K562 (cell line): ENCODE measurements at regions of chr1 and their contacts with region 1.

Region 1: DNA sequence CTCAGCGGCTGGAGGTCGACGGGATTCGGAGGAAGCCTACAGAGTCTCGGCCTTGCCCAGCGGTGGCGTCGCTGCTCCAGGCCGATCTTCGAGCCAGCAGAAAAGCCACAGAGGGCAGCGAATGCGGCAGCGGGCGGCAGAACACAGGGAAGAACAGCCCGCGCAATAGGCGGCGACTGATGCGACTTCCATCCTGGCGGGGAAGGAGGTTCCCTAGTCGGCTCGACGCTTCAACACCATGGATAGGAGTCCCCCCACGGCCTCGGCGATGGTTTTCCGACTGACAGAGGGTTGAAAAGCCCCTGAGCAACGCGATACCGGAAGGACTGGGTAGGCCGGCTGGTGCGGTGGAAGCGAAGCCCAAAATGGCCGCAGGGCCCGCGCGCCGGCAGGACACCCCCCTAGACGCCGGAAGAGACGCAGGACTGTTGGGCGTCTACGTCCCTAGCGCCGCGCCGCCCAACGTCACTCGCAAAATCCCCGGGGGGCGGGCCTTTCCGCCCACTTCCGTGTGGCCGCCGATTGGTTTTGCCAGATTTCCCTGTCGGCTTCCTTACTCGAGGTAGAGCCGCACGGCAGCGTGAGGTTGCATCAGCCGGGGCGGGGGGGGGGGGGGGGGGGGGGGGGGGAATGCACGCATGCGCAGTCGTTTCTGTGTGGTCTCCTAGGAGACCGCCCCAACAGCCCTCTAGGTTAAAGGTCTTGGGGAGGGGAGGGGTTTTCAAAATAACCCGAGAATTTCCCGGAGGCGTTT is at the start of gene PPP1R15B:
- DNase-seq: peak; percentile 98 to 99 (median 99)
- ATAC-seq: peak; percentile 90
- H3K4me3 ChIP-seq: peak within 1 kb of the TSS; percentile 90
- H3K27ac ChIP-seq: peak within 1 kb of the TSS; percentile 93
- H3K4me1 ChIP-seq: peaks cover 9 to 10% of the 10 kb centered on the region in 2 experiments; a peak in 4 of 5 replicates
- H3K27me3 ChIP-seq: no peaks in the 10 kb centered on the region
- CTCF ChIP-seq: no peak
- EP300 ChIP-seq: peak; percentile 74
- POLR2A ChIP-seq: peak; percentile 97
- RAD21 ChIP-seq: no peak
- polyA plus RNA-seq, gene PPP1R15B: 17.0 to 24.7 TPM

Region 2: GRCh38 chr1:204398217-204399081 is 13.2 kb before region 1 on chr1:
- CTCF ChIA-PET with region 1: interaction called, 4 read pairs
- POLR2A ChIA-PET with region 1: interaction called, 87 read pairs
- in situ Hi-C with region 1: no loop called
- intact Hi-C with region 1: no loop called
- DNase-seq: peak; percentile 80 to 94 (median 90)
- ATAC-seq: peak; percentile 79
- H3K4me3 ChIP-seq: no peak overlapping the region
- H3K27ac ChIP-seq: no peak overlapping the region
- H3K4me1 ChIP-seq: peaks cover 0 to 11% of the 10 kb centered on the region in 2 experiments; a peak in 3 of 5 replicates
- H3K27me3 ChIP-seq: 0 out of 5 replicates have a peak, but pooled peaks cover 0 to 2% of the 10 kb centered on the region in 2 experiments
- CTCF ChIP-seq: peak; percentile 89 to 97 (median 94)
- EP300 ChIP-seq: no peak
- POLR2A ChIP-seq: no peak
- RAD21 ChIP-seq: peak; percentile 65 to 73

Region 3: GRCh38 chr1:204424001-204424400 is 12.4 kb after region 1 on chr1:
- CTCF ChIA-PET with region 1: no interaction called
- POLR2A ChIA-PET with region 1: interaction called, 11 read pairs
- in situ Hi-C with region 1: no loop called
- intact Hi-C with region 1: no loop called
- DNase-seq: no peak
- ATAC-seq: no peak
- H3K4me3 ChIP-seq: no peak overlapping the region
- H3K27ac ChIP-seq: no peak overlapping the region
- H3K4me1 ChIP-seq: peaks cover 9 to 15% of the 10 kb centered on the region in 2 experiments; a peak in 4 of 5 replicates
- H3K27me3 ChIP-seq: peaks cover 2 to 17% of the 10 kb centered on the region in 2 experiments; a peak in 1 of 5 replicates
- CTCF ChIP-seq: no peak
- EP300 ChIP-seq: no peak
- POLR2A ChIP-seq: no peak
- RAD21 ChIP-seq: no peak

Region 4: DNA sequence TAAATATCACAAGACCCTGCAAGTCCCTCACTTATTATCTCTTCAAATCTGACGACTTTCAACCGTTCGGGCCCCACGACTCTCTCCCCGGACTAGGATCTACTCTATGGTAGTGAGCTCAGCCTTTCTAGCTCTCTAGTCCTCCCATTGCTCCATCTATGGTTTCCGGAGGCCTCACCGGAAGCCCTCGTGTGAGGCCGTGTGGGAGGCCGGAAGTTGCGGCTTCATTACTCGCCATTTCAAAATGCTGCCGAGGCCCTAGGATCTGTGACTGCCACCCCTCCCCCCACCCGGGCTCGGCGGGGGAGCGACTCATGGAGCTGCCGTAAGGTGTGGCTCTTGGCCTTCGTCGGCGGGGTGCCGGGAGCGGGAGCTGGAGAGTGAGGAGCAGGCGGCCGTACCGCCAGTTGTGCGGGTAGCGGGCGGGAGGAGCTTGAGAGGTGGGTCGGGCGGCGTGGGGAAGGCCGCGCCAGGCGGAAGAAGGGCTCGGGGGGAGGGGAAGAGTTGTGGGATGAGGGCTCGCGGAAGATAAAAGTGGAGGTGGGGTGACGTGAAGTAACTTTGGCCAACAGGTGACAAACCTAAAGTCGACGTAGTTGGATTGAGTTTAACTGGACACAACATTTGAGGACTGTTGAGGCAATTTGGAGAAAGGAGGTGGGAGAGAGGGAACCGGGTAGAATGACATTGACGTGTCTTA is 104.7 kb after region 1 on chr1 and contains the start of gene MDM4:
- CTCF ChIA-PET with region 1: no interaction called
- POLR2A ChIA-PET with region 1: interaction called, 24 read pairs
- in situ Hi-C with region 1: no loop called
- intact Hi-C with region 1: no loop called
- DNase-seq: peak; percentile 94 to 99 (median 95)
- ATAC-seq: peak; percentile 95
- H3K4me3 ChIP-seq: peak within 1 kb of the TSS; percentile 75
- H3K27ac ChIP-seq: peak within 1 kb of the TSS; percentile 98
- H3K4me1 ChIP-seq: peaks cover 34 to 43% of the 10 kb centered on the region in 2 experiments
- H3K27me3 ChIP-seq: no peaks in the 10 kb centered on the region
- CTCF ChIP-seq: no peak
- EP300 ChIP-seq: peak; percentile 83
- POLR2A ChIP-seq: peak; percentile 98
- RAD21 ChIP-seq: no peak
- polyA plus RNA-seq, gene MDM4: 3.3 to 11.1 TPM